MCF 10A (cell line): ENCODE measurements at regions of chr15 and their contacts with region 1.

Region 1: GRCh38 chr15:99250494-99251435 is 516 bp upstream of the LRRC28 start:
- DNase-seq: peak; percentile 98
- H3K4me3 Mint-ChIP-seq: no peak overlapping the region
- H3K27ac Mint-ChIP-seq: no peak overlapping the region
- H3K4me1 Mint-ChIP-seq: peaks cover 23% of the 10 kb centered on the region
- H3K27me3 Mint-ChIP-seq: no peaks in the 10 kb centered on the region
- CTCF ChIP-seq: no peak

Region 2: DNA sequence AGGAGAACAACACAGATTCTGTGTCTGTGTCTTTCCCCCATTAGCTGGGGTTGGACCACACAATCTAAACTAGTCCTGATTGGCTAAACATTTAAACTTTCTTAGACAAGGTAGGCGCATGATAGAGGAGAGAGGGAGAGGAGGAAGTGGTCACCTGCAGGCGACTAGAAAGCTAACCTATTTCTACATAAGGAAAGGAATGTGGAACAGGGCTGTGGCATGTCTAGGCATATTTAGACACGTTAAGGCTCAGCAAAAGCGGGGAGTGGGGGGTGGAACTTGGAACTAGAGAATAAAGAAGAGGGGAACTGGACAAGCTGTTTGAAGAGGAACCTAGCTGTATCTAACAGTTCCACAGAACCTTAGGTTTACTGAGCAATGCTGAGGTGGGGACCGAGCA is 13.4 kb after region 1 on chr15:
- CTCF ChIA-PET with region 1: interaction called, 3 read pairs
- POLR2A ChIA-PET with region 1: interaction called, 62 read pairs
- intact Hi-C with region 1: no loop called
- DNase-seq: peak; percentile 72
- H3K4me3 Mint-ChIP-seq: no peak overlapping the region
- H3K27ac Mint-ChIP-seq: peak overlapping the region; percentile 65
- H3K4me1 Mint-ChIP-seq: peaks cover 16% of the 10 kb centered on the region
- H3K27me3 Mint-ChIP-seq: no peaks in the 10 kb centered on the region
- CTCF ChIP-seq: no peak

Region 3: DNA sequence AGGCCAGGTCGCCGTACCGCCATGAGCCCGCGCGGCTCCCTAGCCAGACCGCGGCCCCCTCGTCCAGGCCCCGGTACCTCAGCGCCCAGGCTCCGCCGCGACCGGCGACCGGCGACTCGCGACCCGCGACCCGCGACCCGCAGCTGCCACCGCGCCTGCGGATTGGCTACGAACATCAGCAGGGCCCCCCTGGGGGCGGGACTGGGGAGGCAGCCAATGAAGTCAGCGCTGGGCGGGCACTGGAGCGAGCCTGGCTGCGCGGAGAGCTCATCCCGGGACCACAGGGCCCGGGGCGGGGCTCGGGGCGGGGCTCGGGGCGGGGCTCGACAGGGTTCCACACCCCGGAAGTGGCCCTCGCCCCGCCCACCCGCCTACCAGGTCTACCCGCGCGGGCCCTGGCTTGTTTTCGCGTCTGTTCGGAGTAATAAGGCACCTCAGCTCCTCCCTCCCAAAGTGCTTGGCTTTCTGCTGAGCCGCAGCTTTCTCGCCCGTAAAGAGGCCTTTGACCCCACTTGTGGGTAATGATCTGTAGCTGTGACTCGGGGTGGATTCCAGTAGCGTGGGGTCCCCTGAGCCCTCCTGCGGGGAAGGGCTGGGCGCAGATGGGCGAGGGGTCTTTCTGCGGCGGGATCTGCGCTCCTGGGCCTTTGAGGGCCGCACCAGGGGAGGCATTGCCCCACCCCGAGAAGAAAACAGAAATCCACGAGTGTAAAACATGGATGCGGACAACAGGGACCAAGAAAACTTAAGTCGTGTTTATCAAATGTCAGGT is 482.7 kb after region 1 on chr15 and contains the start of gene LYSMD4:
- CTCF ChIA-PET with region 1: no interaction called
- POLR2A ChIA-PET with region 1: interaction called, 17 read pairs
- intact Hi-C with region 1: no loop called
- DNase-seq: peak; percentile 95
- H3K4me3 Mint-ChIP-seq: peak within 1 kb of the TSS; percentile 77
- H3K27ac Mint-ChIP-seq: peak within 1 kb of the TSS; percentile 94
- H3K4me1 Mint-ChIP-seq: peaks cover 14% of the 10 kb centered on the region
- H3K27me3 Mint-ChIP-seq: no peaks in the 10 kb centered on the region
- CTCF ChIP-seq: no peak
- total RNA-seq, gene LYSMD4: 5.7 and 9.0 TPM in 2 replicates